ENCODE measurements at regions of chr11 and their contacts with region 1.

Region 1: DNA sequence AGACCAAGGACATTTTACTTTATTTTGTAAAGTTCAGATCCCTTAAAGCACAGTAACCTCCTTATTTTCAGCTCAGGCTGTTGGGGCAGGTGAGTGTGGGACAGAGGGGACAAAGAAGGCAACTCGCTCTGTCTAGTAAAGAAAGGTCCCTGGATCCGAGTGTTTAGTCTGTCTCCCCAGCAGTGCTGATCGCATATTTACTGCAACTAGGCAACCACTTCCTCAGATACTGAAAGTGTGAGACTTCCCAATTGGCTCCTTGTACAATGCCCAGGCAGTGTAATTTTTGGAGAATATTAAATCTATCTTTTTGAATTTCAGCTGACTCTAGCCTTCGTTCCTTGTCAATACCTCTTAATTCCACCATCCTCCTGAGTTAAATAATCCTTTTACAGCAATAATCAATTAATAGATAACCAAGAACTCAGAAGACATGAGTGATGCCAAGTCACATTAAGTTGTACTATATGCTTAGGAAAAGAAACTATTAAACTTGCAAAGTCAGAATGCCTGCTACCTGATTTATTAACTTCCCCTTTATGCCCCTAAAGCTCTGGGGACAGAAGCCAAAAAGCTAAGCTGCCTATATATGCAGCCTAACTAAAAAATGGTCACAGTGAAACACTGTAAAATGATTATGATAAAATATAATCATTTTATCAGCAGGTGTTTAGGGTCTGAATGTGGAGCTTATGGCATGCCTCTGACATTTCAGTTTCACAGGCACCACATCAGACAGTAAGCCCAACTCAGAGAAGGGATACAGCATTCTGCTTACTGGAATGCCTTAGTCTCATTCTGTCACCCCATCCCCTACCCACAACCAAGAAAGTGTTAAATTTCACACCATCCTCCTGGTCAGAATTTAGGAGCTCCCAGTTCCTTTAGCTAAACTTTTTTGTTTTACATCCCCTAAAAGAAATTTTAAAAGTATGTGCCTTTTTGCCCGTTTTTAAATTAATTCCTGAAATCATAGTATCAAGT is 138.7 kb downstream of the TRIM44 start:
- DNase-seq: no peak
- ATAC-seq: peak; percentile 88
- H3K4me3 ChIP-seq: no peak overlapping the region
- H3K27ac ChIP-seq: peak overlapping the region; percentile 6; the same call in 1 of the 2 replicates
- H3K4me1 ChIP-seq: peaks cover 4% of the 10 kb centered on the region
- H3K27me3 ChIP-seq: no peaks in the 10 kb centered on the region
- CTCF ChIP-seq: no peak
- EP300 ChIP-seq: no peak
- POLR2A ChIP-seq: no peak
- RAD21 ChIP-seq: no peak

Region 2: DNA sequence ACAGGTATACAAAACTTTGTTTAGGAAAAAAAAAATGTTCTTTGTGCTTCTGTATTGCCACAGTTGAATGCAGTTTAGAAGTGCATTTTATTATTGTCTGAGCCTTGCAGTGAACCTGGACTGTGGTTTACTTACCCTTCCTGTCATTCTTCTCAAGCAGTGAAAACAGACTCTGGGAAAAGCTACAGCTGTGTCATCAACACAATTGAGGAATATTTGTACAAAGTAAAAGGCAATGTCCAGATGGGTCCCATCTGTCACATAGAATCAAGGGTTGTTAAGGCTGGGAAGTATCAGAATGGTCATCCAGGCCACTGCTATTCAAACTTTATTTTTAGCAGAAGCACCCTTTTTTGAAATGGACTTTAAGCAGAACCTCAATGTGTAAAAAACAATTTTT is 65.4 kb before region 1 on chr11:
- CTCF ChIA-PET with region 1: no interaction called
- POLR2A ChIA-PET with region 1: no interaction called
- RAD21 ChIA-PET with region 1: no interaction called
- SMC1A ChIA-PET with region 1: no interaction called
- in situ Hi-C with region 1: no loop called
- intact Hi-C with region 1: no loop called
- DNase-seq: no peak
- ATAC-seq: no peak
- H3K4me3 ChIP-seq: no peak overlapping the region
- H3K27ac ChIP-seq: no peak overlapping the region
- H3K4me1 ChIP-seq: no peaks in the 10 kb centered on the region
- H3K27me3 ChIP-seq: no peaks in the 10 kb centered on the region
- CTCF ChIP-seq: no peak
- EP300 ChIP-seq: no peak
- POLR2A ChIP-seq: no peak
- RAD21 ChIP-seq: no peak

Region 3: GRCh38 chr11:35785287-35786167 is 15.7 kb before region 1 on chr11:
- CTCF ChIA-PET with region 1: interaction called, 3 read pairs
- POLR2A ChIA-PET with region 1: no interaction called
- RAD21 ChIA-PET with region 1: interaction called, 12 read pairs
- SMC1A ChIA-PET with region 1: interaction called, 21 read pairs
- in situ Hi-C with region 1: no loop called
- intact Hi-C with region 1: no loop called
- DNase-seq: peak; percentile 43
- ATAC-seq: peak; percentile 86
- H3K4me3 ChIP-seq: no peak overlapping the region
- H3K27ac ChIP-seq: peak overlapping the region; percentile 66
- H3K4me1 ChIP-seq: peaks cover 17% of the 10 kb centered on the region
- H3K27me3 ChIP-seq: no peaks in the 10 kb centered on the region
- CTCF ChIP-seq: no peak
- EP300 ChIP-seq: no peak
- POLR2A ChIP-seq: no peak
- RAD21 ChIP-seq: no peak

Region 4: GRCh38 chr11:35811775-35812174 is 10.5 kb after region 1 on chr11:
- CTCF ChIA-PET with region 1: interaction called, 17 read pairs
- POLR2A ChIA-PET with region 1: interaction called, 5 read pairs
- RAD21 ChIA-PET with region 1: no interaction called
- SMC1A ChIA-PET with region 1: interaction called, 14 read pairs
- in situ Hi-C with region 1: no loop called
- intact Hi-C with region 1: no loop called
- DNase-seq: no peak
- ATAC-seq: peak; percentile 84
- H3K4me3 ChIP-seq: no peak overlapping the region
- H3K27ac ChIP-seq: no peak overlapping the region
- H3K4me1 ChIP-seq: no peaks in the 10 kb centered on the region
- H3K27me3 ChIP-seq: no peaks in the 10 kb centered on the region
- CTCF ChIP-seq: peak in 1 of 3 experiments; percentile 10; a peak in 1 of 6 replicates
- EP300 ChIP-seq: no peak
- POLR2A ChIP-seq: no peak
- RAD21 ChIP-seq: no peak